CD4-positive, alpha-beta T cell (primary cell): ENCODE measurements at regions of chr21 and their contacts with region 1.

Region 1: DNA sequence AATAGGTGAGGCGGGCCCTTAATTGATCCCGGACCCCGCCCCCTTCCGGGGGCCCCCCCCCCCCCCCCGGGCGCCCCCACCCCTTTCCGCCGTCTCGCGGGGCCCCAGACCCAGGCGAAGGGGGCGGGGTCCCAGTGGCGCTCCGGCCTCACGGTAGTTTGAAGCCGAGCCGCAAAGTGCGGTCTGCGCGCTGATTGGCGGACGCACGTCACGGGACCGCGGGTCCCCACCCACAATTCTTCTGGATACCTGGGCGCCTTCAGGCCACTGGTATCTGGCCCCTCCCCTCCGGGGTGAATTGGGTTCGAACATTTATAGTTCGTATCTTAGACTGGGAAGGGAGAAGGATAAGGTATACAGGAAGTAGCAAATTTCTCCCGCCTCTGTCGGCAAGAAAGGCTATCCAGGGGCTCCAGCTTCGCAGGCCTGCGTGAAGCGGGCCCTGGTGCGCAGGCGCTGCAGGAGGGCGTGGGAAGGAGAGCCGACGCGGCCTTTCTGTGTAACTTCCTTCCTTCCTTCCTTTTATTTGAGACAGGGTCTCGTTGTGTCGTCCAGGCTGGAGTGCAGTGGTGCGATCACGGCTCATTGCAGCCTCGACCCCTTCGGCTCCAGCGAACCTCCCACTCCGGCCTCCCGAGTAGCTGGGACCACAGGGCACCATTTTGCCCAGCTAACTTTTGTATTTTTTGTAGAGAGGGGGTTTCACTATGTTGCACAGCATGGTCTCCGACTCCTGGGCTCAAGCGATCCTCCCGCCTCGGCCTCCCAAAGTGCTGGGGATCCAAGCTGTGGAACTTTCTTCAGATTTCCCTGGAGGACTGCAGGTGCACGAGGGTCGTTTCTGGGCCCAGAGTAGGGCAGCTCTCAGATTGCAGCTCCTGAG is 564 bp upstream of the HMGN1 start:
- DNase-seq: peak; percentile 94 to 98 (median 96)
- ATAC-seq: peak; percentile 83
- H3K4me3 ChIP-seq: peak overlapping the region; percentile 79
- H3K4me3 Mint-ChIP-seq: peak overlapping the region; percentile 96
- H3K27ac ChIP-seq: peak overlapping the region; percentile 90
- H3K27ac Mint-ChIP-seq: peak overlapping the region; percentile 99
- H3K4me1 ChIP-seq: peaks cover 25% of the 10 kb centered on the region
- H3K4me1 Mint-ChIP-seq: peaks cover 43% of the 10 kb centered on the region
- H3K27me3 ChIP-seq: no peaks in the 10 kb centered on the region
- H3K27me3 Mint-ChIP-seq: no peaks in the 10 kb centered on the region
- CTCF ChIP-seq: no peak

Region 2: GRCh38 chr21:39183237-39184007 is 166.0 kb before region 1 on chr21 and contains the start of gene PSMG1:
- CTCF ChIA-PET with region 1: no interaction called
- POLR2A ChIA-PET with region 1: interaction called, 24 read pairs
- intact Hi-C with region 1: loop called in 1 of 2 experiments (anchors 2 kb)
- DNase-seq: peak; percentile 86 to 97 (median 92)
- ATAC-seq: peak; percentile 92
- H3K4me3 ChIP-seq: peak within 1 kb of the TSS; percentile 87
- H3K4me3 Mint-ChIP-seq: peak within 1 kb of the TSS; percentile 91
- H3K27ac ChIP-seq: peak within 1 kb of the TSS; percentile 81 to 92
- H3K27ac Mint-ChIP-seq: peak within 1 kb of the TSS; percentile 91
- H3K4me1 ChIP-seq: peaks cover 18% of the 10 kb centered on the region
- H3K4me1 Mint-ChIP-seq: peaks cover 76% of the 10 kb centered on the region
- H3K27me3 ChIP-seq: no peaks in the 10 kb centered on the region
- H3K27me3 Mint-ChIP-seq: no peaks in the 10 kb centered on the region
- CTCF ChIP-seq: no peak
- total RNA-seq, gene PSMG1: 7.8 to 7.9 TPM

Region 3: DNA sequence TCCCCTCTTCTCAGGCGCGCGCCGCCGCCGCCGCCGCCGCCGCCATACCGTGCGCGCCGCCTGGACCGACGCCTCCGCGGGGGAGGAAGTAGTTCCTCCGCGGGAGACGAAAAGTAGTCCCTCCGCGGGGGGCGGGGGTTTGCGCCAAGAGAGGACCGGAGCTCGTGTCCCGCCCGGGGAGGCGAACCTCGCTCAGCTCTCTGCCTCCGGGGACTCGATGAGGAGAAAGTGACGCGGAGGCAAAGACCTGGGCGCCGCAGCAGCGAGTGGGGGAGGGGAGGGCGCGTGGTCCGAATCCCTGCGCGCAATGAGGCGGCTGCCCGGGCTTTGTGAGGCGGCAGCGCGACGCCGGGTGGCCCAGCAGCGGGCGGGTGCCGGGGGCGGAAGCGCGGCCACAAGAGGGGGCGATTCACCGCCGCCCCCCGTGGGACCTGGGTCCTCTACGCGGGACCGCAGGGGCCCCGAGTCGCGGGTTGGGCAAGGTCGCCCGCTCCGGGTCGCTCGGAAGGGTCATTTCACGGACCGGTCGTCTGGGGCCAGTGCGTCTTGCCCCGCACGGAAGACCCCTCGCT is 35.8 kb before region 1 on chr21 and contains the start of gene BRWD1:
- CTCF ChIA-PET with region 1: interaction called, 3 read pairs
- POLR2A ChIA-PET with region 1: interaction called, 201 read pairs
- intact Hi-C with region 1: loop called (anchors 1 kb)
- DNase-seq: peak; percentile 68 to 92 (median 75)
- ATAC-seq: peak; percentile 27
- H3K4me3 ChIP-seq: peak within 1 kb of the TSS; percentile 79
- H3K4me3 Mint-ChIP-seq: peak within 1 kb of the TSS; percentile 95
- H3K27ac ChIP-seq: peak within 1 kb of the TSS; percentile 55 to 85
- H3K27ac Mint-ChIP-seq: peak within 1 kb of the TSS; percentile 93
- H3K4me1 ChIP-seq: peaks cover 31% of the 10 kb centered on the region
- H3K4me1 Mint-ChIP-seq: peaks cover 50% of the 10 kb centered on the region
- H3K27me3 ChIP-seq: no peaks in the 10 kb centered on the region
- H3K27me3 Mint-ChIP-seq: no peaks in the 10 kb centered on the region
- CTCF ChIP-seq: no peak
- total RNA-seq, gene BRWD1: 84.7 to 92.2 TPM

Region 4: GRCh38 chr21:39319181-39319756 is 30.2 kb before region 1 on chr21:
- CTCF ChIA-PET with region 1: no interaction called
- POLR2A ChIA-PET with region 1: interaction called, 201 read pairs
- intact Hi-C with region 1: no loop called
- DNase-seq: no peak
- ATAC-seq: no peak
- H3K4me3 ChIP-seq: no peak overlapping the region
- H3K4me3 Mint-ChIP-seq: no peak overlapping the region
- H3K27ac ChIP-seq: no peak overlapping the region
- H3K27ac Mint-ChIP-seq: no peak overlapping the region
- H3K4me1 ChIP-seq: peaks cover 14% of the 10 kb centered on the region
- H3K4me1 Mint-ChIP-seq: peaks cover 16% of the 10 kb centered on the region
- H3K27me3 ChIP-seq: no peaks in the 10 kb centered on the region
- H3K27me3 Mint-ChIP-seq: no peaks in the 10 kb centered on the region
- CTCF ChIP-seq: no peak

Region 5: GRCh38 chr21:39379986-39380891 is 30.8 kb after region 1 on chr21:
- CTCF ChIA-PET with region 1: interaction called, 4 read pairs
- POLR2A ChIA-PET with region 1: interaction called, 65 read pairs
- intact Hi-C with region 1: loop called (anchors 2 kb)
- DNase-seq: peak; percentile 75 to 95 (median 86)
- ATAC-seq: peak; percentile 97
- H3K4me3 ChIP-seq: peak overlapping the region; percentile 98
- H3K4me3 Mint-ChIP-seq: peak overlapping the region; percentile 93
- H3K27ac ChIP-seq: peak overlapping the region; percentile 75 to 85
- H3K27ac Mint-ChIP-seq: peak overlapping the region; percentile 88
- H3K4me1 ChIP-seq: peaks cover 17% of the 10 kb centered on the region
- H3K4me1 Mint-ChIP-seq: peaks cover 33% of the 10 kb centered on the region
- H3K27me3 ChIP-seq: peaks cover 0 to 2% of the 10 kb centered on the region in 2 experiments
- H3K27me3 Mint-ChIP-seq: no peaks in the 10 kb centered on the region
- CTCF ChIP-seq: no peak

Region 6: DNA sequence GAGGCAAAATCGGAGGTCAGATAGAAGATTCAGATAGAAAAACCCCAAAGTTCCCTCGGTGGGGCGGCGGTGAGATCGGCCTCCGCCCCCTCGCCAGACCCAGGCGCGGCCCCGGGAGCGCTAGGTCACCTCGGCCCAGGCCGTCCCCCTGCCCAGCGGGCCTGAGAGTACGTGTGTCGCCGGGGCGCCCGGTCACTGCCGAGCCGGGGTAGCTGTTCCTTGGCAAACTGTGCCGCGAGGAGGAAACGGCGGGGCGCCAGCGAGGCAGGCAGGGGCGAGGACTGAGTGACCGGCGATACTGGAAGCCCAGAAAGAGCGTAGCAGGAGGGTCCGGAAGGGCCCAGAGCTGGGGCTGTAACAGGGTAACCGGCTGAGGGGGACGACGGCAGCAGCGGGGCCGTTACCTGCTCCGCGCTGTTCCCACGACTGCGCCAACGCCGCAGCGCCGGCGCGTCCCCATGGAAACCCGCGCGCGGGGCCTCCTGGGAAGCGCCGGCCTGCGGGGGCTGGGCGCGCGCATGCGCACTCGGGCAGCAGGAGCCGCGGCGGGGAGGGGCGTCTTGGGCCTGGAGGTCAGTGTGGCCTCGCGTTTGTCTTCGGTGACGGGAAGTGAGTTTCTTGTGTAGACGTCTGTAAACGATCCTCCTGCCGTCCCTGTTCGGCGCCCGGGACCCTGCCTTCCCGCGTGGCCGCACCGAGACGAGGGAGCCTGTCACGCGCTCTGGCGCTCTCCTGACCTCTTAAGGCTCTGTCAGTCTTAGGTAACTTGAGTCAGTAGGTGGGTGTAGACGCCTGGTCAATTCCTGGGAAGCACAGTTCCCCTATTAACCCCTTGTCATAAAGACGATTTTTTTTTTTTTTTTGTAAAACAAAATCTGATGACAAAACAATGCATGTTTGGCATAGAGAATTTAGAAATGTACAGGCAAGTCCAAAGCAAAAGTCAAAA is 96.1 kb after region 1 on chr21 and contains the start of gene LCA5L:
- CTCF ChIA-PET with region 1: no interaction called
- POLR2A ChIA-PET with region 1: interaction called, 3 read pairs
- intact Hi-C with region 1: loop called in 1 of 2 experiments (anchors 2 kb)
- DNase-seq: peak; percentile 76 to 96 (median 86)
- ATAC-seq: peak; percentile 93
- H3K4me3 ChIP-seq: peak within 1 kb of the TSS; percentile 71
- H3K4me3 Mint-ChIP-seq: peak within 1 kb of the TSS; percentile 92
- H3K27ac ChIP-seq: peak within 1 kb of the TSS; percentile 68 to 74
- H3K27ac Mint-ChIP-seq: peak within 1 kb of the TSS; percentile 91
- H3K4me1 ChIP-seq: peaks cover 11% of the 10 kb centered on the region
- H3K4me1 Mint-ChIP-seq: peaks cover 15% of the 10 kb centered on the region
- H3K27me3 ChIP-seq: no peaks in the 10 kb centered on the region
- H3K27me3 Mint-ChIP-seq: peaks cover 16% of the 10 kb centered on the region
- CTCF ChIP-seq: no peak
- total RNA-seq, gene LCA5L: 0.17 TPM in 1 of 2 experiments, not detected in the other